Esophagus muscularis mucosa (tissue), 4 donors: ENCODE measurements at regions of chr16 and their contacts with region 1.

Region 1: DNA sequence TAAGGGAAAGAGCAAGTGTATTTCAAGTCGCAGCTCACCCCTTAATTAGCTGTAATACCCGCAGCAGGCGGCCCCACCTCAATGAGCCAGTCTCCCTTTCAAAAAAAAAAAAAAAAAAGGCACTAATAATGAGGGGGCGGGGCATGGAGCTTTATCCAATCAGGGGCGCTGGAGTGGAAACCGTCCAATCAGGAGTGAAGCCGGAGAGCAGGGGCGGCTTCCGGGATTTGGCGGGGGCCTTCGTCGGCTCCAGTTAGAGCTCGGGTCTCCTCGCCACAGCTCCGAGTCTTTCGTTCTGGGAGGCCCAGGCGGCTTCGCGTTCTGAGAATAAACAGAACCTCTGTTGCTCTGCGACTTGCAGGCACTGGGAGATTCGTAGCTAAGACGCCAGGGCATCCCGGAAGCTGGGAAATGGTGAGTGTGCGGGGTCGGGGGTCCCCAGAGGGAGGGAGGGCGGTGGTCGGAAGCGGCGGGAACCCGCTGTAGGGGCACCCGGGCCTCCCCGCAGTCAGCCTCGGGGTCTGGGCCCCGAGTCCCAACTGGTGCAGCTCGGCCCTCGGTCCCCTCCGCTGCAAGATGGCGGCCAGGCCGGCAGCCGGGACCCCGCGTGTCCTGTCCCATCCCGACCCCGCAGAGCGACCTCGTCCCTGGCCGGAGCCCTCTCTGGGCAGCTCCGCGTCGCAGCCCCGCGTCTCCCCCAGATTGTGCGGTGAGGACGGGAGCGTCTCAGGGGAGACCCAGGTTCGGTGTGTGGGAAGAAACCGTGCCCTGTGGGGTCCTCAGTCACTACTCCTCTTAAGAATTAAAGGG is at the start of gene ZNF267:
- DNase-seq: peak; percentile 98
- H3K4me3 ChIP-seq: peak within 1 kb of the TSS; percentile 84 to 99 (median 88)
- H3K27ac ChIP-seq: peak within 1 kb of the TSS; percentile 89 to 98 (median 94)
- H3K4me1 ChIP-seq: peaks cover 26 to 56% (median 53%) of the 10 kb centered on the region in 4 donors
- H3K27me3 ChIP-seq: no peaks in the 10 kb centered on the region
- CTCF ChIP-seq: no peak
- EP300 ChIP-seq: no peak
- POLR2A ChIP-seq: peak; percentile 62
- total RNA-seq, gene ZNF267: 6.1 to 9.1 (median 7.4) TPM

Region 2: DNA sequence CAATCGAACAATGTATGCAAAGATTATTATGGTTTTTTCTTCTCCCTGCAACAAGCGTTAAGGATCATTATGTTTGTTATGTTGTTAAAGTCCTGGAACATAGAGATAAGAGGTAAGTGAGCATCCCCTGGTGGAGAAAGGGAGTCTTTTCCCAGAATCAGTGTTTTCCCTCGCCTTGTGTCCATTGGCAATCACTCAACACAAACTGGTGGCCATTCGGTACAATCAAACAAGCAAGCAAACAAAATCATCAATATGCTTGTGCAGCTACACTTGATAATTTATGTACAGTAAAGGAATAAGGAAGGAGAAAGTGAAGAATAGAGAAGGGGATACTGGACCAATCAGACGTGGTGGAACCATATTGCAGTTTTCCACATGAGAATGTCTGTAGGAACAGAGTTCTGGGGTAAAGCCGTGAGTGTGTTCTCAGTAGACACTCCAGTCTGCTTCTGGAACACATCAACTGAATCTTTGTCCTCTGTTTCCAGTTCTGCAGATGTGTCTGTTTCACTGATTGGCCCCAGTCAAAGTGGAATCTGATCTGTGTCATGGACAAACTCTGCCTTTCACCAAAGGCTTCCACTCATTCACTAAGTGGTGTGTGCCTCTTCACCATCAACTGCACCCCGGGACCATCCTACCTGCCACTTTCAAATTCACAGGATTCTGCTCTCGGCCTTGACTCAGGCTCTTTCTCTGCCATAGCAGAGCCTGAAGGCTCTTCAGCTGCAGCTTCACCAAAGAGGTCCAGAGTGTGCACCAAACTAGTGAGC is 176.6 kb before region 1 on chr16:
- intact Hi-C with region 1: no loop called
- DNase-seq: peak; percentile 64
- H3K4me3 ChIP-seq: no peak overlapping the region
- H3K27ac ChIP-seq: no peak overlapping the region
- H3K4me1 ChIP-seq: peaks cover 8 to 20% (median 19%) of the 10 kb centered on the region in 4 donors
- H3K27me3 ChIP-seq: no peaks in the 10 kb centered on the region
- CTCF ChIP-seq: peak; percentile 17 to 43 (median 40)
- EP300 ChIP-seq: no peak
- POLR2A ChIP-seq: no peak

Region 3: DNA sequence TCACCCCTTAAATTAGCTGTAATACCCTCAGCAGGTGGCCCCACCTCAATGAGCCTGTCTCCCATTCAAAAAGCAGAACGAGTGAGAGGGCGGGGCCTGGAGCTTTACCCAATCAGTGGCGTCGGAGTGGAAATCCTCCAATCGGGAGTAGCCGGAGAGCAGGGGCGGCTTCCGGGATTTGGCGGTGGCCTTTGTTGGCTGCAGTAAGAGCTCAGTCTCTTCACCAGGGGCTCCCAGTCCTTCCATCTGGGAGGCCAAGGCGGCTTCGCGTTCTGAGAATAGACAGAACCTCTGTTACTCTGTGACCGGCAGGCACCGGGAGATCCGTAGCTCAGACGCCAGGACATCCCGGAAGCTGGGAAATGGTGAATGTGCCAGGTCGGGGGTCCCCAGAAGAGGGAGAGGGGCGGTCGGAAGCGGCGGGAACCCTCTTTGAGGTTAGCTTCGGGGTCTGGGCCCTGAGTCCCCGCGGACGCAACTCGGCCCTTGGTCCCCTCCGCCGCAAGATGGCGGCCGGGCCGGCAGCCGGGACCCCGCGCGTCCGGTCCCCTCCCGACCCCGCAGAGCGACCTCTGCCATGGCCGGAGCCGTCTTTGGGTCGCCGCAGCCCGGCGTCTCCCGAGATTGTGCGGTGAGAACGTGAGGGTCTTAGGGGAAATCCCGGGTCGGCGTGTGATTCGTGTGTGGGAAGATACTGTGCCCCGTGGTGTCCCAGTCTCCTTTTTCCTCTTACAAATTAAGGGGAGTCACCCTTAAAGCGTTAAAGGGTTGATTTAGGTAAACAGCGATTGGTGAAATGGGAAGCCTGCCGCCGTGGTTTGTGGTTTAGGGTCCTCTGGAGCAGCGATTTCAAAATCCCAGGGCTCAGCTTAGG is 160.5 kb before region 1 on chr16:
- intact Hi-C with region 1: loop called (anchors 10 kb)
- DNase-seq: peak; percentile 99
- H3K4me3 ChIP-seq: peak overlapping the region; percentile 74 to 98 (median 90)
- H3K27ac ChIP-seq: peak overlapping the region; percentile 88 to 96 (median 94)
- H3K4me1 ChIP-seq: peaks cover 15 to 35% (median 24%) of the 10 kb centered on the region in 4 donors
- H3K27me3 ChIP-seq: no peaks in the 10 kb centered on the region
- CTCF ChIP-seq: no peak
- EP300 ChIP-seq: no peak
- POLR2A ChIP-seq: peak; percentile 57

Region 4: DNA sequence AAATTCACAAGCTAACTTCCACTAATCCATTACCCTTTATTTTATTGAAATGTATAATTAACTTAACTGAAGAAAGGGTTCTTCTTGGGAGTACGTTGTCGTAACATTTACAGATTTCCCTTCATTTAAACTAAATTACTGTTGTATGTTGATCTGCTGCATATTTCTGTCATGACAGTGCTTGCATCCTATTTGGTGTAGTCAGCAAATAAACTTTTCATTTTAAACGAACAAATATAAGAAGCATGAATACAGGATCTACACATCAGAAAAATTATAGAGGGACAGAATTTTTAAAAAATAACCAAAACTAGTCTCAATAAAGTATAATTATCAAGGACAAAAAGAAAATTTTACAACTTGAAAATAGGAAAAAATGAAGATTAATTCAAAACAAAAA is 66.7 kb before region 1 on chr16:
- intact Hi-C with region 1: no loop called
- DNase-seq: no peak
- H3K4me3 ChIP-seq: no peak overlapping the region
- H3K27ac ChIP-seq: no peak overlapping the region
- H3K4me1 ChIP-seq: no peaks in the 10 kb centered on the region
- H3K27me3 ChIP-seq: no peaks in the 10 kb centered on the region
- CTCF ChIP-seq: no peak
- EP300 ChIP-seq: no peak
- POLR2A ChIP-seq: no peak